ENCODE measurements at regions of chr2 and their contacts with region 1.

Region 1: DNA sequence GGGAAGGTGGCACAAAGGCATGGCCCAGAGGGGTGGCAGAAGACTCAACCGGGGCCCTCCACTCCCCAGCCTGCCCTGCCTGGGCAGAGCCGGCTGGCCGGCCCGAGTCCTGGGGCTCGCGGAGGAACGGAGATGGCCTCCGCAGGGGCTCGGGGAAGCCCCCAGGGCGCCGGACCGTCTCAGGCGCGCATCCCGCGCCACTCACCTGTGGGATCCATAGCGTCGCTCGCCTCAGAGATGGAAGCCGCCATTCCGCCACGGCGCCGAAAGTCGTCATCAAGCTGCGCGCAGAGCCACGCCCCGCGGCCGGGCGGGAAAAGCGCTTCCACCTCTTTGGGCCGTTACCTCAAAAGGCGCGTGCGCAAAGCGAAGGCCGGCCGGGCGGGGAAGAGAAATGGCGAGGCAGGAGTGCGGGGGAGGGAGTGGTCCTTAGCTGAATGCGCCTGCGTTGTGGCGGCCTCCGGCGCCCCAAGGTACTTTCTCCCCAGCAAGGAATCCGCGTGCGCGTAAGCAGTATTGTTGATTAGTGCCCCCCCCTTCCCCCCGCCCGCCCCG is at the start of gene SMPD4:
- DNase-seq: peak; percentile 99
- total RNA-seq, gene SMPD4: 22.5 TPM

Region 2: DNA sequence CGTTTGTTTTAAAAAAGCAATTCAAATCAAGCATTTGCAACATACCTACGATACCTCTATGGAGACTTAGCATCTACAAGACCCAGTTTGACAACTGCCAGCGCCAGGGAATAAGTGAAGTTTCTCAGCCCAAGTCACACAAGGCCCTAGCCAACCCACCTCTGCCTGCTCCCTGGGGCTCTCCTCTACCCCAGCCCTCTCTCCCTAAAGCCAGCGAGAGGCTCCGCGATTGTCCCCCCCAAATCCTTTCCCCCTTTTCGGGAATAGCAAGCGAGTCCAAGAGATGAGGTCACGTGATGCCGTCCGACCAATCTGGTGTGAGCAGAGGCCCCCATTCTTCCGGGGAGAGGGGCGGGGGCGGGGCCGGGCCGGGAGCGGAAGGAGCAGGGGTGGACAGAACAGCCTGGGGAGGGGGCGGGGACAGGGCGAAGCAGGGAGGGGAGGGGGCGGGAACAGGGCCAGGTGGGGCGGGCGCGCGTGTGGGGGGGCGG is 304.1 kb before region 1 on chr2:
- intact Hi-C with region 1: loop called (anchors 10 kb)
- DNase-seq: peak; percentile 94

Region 3: DNA sequence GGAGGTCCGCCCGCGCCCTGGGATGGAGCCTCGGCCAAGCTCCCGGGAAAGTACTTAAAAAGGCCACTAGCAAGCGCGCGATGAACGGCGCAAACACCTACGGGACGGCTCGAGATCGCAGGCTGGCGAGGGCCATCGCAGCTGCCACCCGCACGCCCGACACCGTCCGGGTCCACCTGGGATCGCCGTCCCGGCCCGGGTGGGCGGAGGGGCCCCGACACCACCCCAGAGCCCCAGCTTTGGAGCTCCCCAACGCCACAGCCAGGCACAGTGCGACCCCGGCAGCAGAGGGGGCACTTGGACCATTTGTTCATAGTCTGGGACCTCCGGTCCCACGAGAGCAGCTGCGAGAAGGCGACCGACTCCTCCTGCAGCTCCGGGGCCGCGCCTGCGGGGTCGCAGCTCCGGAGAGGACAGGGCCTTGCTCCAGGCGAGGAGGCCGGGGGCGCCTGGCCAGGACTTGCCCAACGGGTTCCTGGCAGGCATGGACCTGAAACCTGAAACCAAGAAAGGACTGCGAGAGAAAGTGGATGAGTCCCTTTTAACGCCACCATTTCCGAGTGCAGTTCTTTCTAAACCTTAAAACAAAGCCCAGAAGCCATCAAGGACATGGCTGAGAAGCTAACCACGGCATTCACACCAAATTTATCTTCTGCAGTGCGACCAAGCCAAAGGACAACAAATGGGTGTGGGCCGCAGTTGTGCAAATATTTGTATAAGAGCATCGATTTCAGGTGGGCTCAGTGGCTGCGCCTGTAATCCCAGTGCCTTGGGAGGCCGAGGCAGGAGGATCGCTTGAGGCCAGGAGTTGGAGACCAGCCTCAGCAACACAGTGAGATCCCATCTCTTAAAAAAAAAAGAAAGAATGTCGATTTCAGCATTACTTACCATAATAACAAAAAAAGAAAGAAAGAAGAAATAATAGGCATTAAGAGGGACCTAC is 107.3 kb after region 1 on chr2:
- intact Hi-C with region 1: no loop called
- DNase-seq: no peak

Region 4: GRCh38 chr2:130303169-130303568 is 121.8 kb after region 1 on chr2:
- intact Hi-C with region 1: no loop called
- DNase-seq: no peak